ENCODE measurements at regions of chr9 and their contacts with region 1.

Region 1: DNA sequence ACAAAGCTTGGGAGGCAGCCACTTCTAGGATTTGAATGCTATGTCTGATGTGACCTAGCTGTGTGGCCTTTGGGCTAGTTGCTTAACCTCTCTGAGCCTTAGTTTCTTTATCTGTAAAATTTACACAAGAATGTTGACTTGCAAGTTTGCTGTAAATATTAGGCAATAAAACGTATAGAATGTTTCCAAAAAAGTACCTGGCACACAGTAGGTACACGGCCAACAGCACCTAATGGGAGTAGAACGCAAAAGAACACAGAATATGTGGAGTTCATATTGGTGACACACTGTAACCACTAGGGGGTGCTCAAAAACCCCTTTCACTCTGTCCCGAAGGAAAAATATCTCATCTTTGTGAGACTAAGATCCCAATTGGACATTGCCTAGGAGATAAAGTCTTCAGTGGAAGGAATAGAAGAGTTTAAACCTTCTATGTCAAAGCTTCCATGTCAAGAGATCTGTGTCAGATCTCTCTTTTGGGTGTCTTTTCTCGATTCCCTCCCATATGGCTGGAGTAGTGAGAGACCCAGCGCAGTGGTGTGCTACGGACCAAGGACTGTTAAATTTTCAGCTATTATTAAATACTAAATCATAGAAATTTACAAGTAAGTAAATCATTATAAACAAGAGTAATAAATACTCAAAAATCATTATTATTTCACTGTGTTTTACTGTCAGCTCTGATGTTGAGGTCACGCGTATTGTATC is 145.4 kb upstream of the RAD23B start:
- DNase-seq: no peak
- ATAC-seq: peak; percentile 70
- H3K4me3 ChIP-seq: no peak overlapping the region
- H3K27ac ChIP-seq: no peak overlapping the region
- H3K4me1 ChIP-seq: no peaks in the 10 kb centered on the region
- H3K27me3 ChIP-seq: peaks cover 0 to 3% of the 10 kb centered on the region in 2 experiments; a peak in 1 of 4 replicates
- CTCF ChIP-seq: peak; percentile 46 to 65 (median 57)
- EP300 ChIP-seq: no peak
- POLR2A ChIP-seq: no peak
- RAD21 ChIP-seq: peak; percentile 55

Region 2: DNA sequence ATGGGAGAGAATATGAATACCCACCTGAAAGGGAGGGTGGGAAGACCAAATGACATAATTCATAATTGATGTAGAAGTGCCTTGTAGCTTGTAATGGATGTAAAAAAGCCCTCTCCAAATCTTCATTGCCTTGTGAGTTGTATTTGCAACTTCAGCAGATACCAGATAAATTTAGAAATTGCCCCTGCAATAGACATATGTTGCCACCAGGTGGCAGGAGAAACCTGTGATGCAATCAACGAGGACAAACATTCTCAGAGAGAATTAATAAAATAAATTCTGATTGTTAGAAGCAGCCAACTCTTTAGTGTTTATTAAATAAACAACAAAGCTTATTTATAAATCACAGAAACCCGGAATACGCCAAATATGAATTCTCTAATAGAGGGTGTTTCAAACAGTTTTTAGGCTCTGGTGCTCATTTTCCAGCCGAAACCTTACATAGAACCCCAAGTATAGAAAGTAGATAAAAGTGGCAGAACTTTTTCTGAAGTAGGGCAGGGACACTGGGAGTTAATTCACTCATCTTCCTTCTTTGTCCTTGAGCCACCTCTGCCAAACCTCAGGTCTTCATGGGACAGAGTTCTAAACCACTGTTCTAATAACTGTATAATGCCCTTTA is 1295.5 kb before region 1 on chr9:
- CTCF ChIA-PET with region 1: interaction called, 10 read pairs
- POLR2A ChIA-PET with region 1: no interaction called
- RAD21 ChIA-PET with region 1: no interaction called
- SMC1A ChIA-PET with region 1: no interaction called
- in situ Hi-C with region 1: no loop called
- intact Hi-C with region 1: no loop called
- DNase-seq: peak; percentile 3
- ATAC-seq: 0 out of 3 replicates have a peak, but pooled peaks have one; percentile 36
- H3K4me3 ChIP-seq: no peak overlapping the region
- H3K27ac ChIP-seq: no peak overlapping the region
- H3K4me1 ChIP-seq: no peaks in the 10 kb centered on the region
- H3K27me3 ChIP-seq: no peaks in the 10 kb centered on the region
- CTCF ChIP-seq: peak; percentile 73 to 81 (median 73)
- EP300 ChIP-seq: no peak
- POLR2A ChIP-seq: no peak
- RAD21 ChIP-seq: peak; percentile 86

Region 3: GRCh38 chr9:107044872-107045271 is 92.8 kb before region 1 on chr9:
- CTCF ChIA-PET with region 1: interaction called, 5 read pairs
- POLR2A ChIA-PET with region 1: no interaction called
- RAD21 ChIA-PET with region 1: interaction called, 4 read pairs
- SMC1A ChIA-PET with region 1: interaction called, 3 read pairs
- in situ Hi-C with region 1: no loop called
- intact Hi-C with region 1: loop called (anchors 5 kb)
- DNase-seq: no peak
- ATAC-seq: peak; percentile 8; the same call in 1 of the 3 replicates
- H3K4me3 ChIP-seq: no peak overlapping the region
- H3K27ac ChIP-seq: no peak overlapping the region
- H3K4me1 ChIP-seq: peaks cover 15% of the 10 kb centered on the region
- H3K27me3 ChIP-seq: no peaks in the 10 kb centered on the region
- CTCF ChIP-seq: peak; percentile 4 to 27 (median 8); a peak in 1 of 6 replicates
- EP300 ChIP-seq: no peak
- POLR2A ChIP-seq: no peak
- RAD21 ChIP-seq: no peak

Region 4: GRCh38 chr9:107080130-107080529 is 57.5 kb before region 1 on chr9:
- CTCF ChIA-PET with region 1: no interaction called
- POLR2A ChIA-PET with region 1: no interaction called
- RAD21 ChIA-PET with region 1: no interaction called
- SMC1A ChIA-PET with region 1: no interaction called
- in situ Hi-C with region 1: no loop called
- intact Hi-C with region 1: no loop called
- DNase-seq: no peak
- ATAC-seq: no peak
- H3K4me3 ChIP-seq: no peak overlapping the region
- H3K27ac ChIP-seq: no peak overlapping the region
- H3K4me1 ChIP-seq: no peaks in the 10 kb centered on the region
- H3K27me3 ChIP-seq: no peaks in the 10 kb centered on the region
- CTCF ChIP-seq: no peak
- EP300 ChIP-seq: no peak
- POLR2A ChIP-seq: no peak
- RAD21 ChIP-seq: no peak

Region 5: DNA sequence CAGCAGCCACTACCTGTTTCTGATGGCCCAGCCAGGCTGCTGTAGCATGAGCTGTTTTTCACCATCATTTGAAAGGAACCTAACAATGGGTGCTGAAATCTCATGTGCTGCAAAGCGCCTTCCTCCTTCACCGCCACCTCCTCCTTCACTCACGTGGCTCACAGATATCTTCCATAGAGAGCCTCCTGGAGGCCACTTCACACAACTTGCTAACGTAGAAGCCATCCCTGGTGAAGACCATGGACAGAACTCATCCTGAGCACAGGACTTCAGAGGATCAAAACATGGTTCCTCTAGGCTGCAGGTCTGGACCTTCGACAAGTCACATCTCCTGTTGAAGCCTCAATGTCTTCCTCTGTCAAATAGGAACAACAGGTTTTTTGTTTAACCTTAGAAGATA is 10.0 kb before region 1 on chr9:
- CTCF ChIA-PET with region 1: interaction called, 34 read pairs
- POLR2A ChIA-PET with region 1: no interaction called
- RAD21 ChIA-PET with region 1: interaction called, 3 read pairs
- SMC1A ChIA-PET with region 1: interaction called, 22 read pairs
- in situ Hi-C with region 1: no loop called
- intact Hi-C with region 1: no loop called
- DNase-seq: no peak
- ATAC-seq: no peak
- H3K4me3 ChIP-seq: no peak overlapping the region
- H3K27ac ChIP-seq: no peak overlapping the region
- H3K4me1 ChIP-seq: no peaks in the 10 kb centered on the region
- H3K27me3 ChIP-seq: no peaks in the 10 kb centered on the region; a peak in 1 of 4 replicates
- CTCF ChIP-seq: no peak
- EP300 ChIP-seq: no peak
- POLR2A ChIP-seq: no peak
- RAD21 ChIP-seq: no peak

Region 6: DNA sequence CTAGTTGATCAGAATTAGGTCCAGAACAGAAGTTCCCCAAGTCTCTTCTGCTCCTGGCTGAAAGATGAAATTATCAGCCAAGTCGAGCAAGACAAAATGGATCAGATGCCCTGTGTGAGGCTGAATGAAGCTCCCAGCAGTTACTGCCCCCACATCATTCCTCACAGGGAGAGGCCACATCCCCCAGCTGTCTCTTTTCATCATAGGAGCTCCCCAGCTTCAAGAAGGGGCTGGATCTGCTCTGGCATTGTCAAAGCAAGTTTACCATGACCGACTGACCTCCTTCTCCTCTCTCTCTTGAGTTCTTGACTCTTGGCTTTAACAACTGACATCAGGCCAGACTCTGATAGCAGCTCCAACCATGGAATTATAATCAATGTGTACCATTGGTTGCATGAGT is 12.1 kb after region 1 on chr9:
- CTCF ChIA-PET with region 1: interaction called, 16 read pairs
- POLR2A ChIA-PET with region 1: no interaction called
- RAD21 ChIA-PET with region 1: no interaction called
- SMC1A ChIA-PET with region 1: interaction called, 5 read pairs
- in situ Hi-C with region 1: no loop called
- intact Hi-C with region 1: no loop called
- DNase-seq: no peak
- ATAC-seq: no peak
- H3K4me3 ChIP-seq: no peak overlapping the region
- H3K27ac ChIP-seq: no peak overlapping the region
- H3K4me1 ChIP-seq: no peaks in the 10 kb centered on the region
- H3K27me3 ChIP-seq: peaks cover 0 to 5% of the 10 kb centered on the region in 2 experiments; a peak in 1 of 4 replicates
- CTCF ChIP-seq: no peak
- EP300 ChIP-seq: no peak
- POLR2A ChIP-seq: no peak
- RAD21 ChIP-seq: no peak

Region 7: DNA sequence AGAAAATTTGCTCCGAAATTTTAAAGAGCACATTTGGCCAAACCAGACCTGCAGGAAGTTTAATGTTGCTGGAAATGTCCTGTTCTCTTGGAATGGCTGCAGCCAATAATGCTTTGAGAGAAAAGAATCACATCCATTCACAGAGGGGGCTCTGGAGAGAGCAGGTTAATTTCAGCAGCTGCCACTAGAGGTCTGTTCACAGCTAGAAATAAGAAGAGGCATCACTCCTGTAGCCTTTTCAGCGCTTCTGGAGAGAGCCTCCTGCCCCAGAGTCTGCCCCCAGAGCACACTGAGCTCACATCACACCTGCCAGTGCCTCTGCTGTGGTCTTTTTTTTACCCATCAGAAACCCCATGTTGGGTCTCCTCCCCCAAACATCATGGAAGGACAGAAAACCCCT is 20.7 kb after region 1 on chr9:
- CTCF ChIA-PET with region 1: interaction called, 23 read pairs
- POLR2A ChIA-PET with region 1: no interaction called
- RAD21 ChIA-PET with region 1: interaction called, 6 read pairs
- SMC1A ChIA-PET with region 1: interaction called, 11 read pairs
- in situ Hi-C with region 1: no loop called
- intact Hi-C with region 1: no loop called
- DNase-seq: no peak
- ATAC-seq: peak; percentile 99
- H3K4me3 ChIP-seq: no peak overlapping the region
- H3K27ac ChIP-seq: no peak overlapping the region
- H3K4me1 ChIP-seq: no peaks in the 10 kb centered on the region
- H3K27me3 ChIP-seq: peaks cover 0 to 3% of the 10 kb centered on the region in 2 experiments; a peak in 1 of 4 replicates
- CTCF ChIP-seq: peak; percentile 41 to 62 (median 56); a peak in 5 of 6 replicates
- EP300 ChIP-seq: no peak
- POLR2A ChIP-seq: no peak
- RAD21 ChIP-seq: peak; percentile 45

Region 8: GRCh38 chr9:107330420-107330819 is 192.8 kb after region 1 on chr9:
- CTCF ChIA-PET with region 1: no interaction called
- POLR2A ChIA-PET with region 1: no interaction called
- RAD21 ChIA-PET with region 1: no interaction called
- SMC1A ChIA-PET with region 1: no interaction called
- in situ Hi-C with region 1: no loop called
- intact Hi-C with region 1: no loop called
- DNase-seq: no peak
- ATAC-seq: no peak
- H3K4me3 ChIP-seq: no peak overlapping the region
- H3K27ac ChIP-seq: no peak overlapping the region
- H3K4me1 ChIP-seq: no peaks in the 10 kb centered on the region
- H3K27me3 ChIP-seq: no peaks in the 10 kb centered on the region
- CTCF ChIP-seq: no peak
- EP300 ChIP-seq: no peak
- POLR2A ChIP-seq: no peak
- RAD21 ChIP-seq: no peak

Measured in GM12878 (cell line).